ENCODE measurements at regions of chr3 and their contacts with region 1.

Region 1: GRCh38 chr3:133573054-133573628 is 345 bp upstream of the CDV3 start:
- DNase-seq: peak; percentile 100
- H3K4me3 ChIP-seq: peak overlapping the region; percentile 96
- H3K4me3 Mint-ChIP-seq: peak overlapping the region; percentile 81
- H3K27ac Mint-ChIP-seq: peak overlapping the region; percentile 96
- H3K4me1 ChIP-seq: peaks cover 58% of the 10 kb centered on the region
- H3K4me1 Mint-ChIP-seq: peaks cover 33% of the 10 kb centered on the region
- H3K27me3 ChIP-seq: no peaks in the 10 kb centered on the region
- H3K27me3 Mint-ChIP-seq: no peaks in the 10 kb centered on the region
- CTCF ChIP-seq: peak in 1 of 2 experiments; percentile 27

Region 2: GRCh38 chr3:132236701-132237651 is 1336.2 kb before region 1 on chr3:
- CTCF ChIA-PET with region 1: no interaction called
- POLR2A ChIA-PET with region 1: no interaction called
- intact Hi-C with region 1: no loop called
- DNase-seq: no peak
- H3K4me3 ChIP-seq: no peak overlapping the region
- H3K4me3 Mint-ChIP-seq: no peak overlapping the region
- H3K27ac Mint-ChIP-seq: no peak overlapping the region
- H3K4me1 ChIP-seq: no peaks in the 10 kb centered on the region
- H3K4me1 Mint-ChIP-seq: no peaks in the 10 kb centered on the region
- H3K27me3 ChIP-seq: no peaks in the 10 kb centered on the region
- H3K27me3 Mint-ChIP-seq: peaks cover 1% of the 10 kb centered on the region
- CTCF ChIP-seq: no peak

Region 3: GRCh38 chr3:133040696-133041523 is 532.2 kb before region 1 on chr3:
- CTCF ChIA-PET with region 1: interaction called, 4 read pairs
- POLR2A ChIA-PET with region 1: interaction called, 10 read pairs
- intact Hi-C with region 1: no loop called
- DNase-seq: peak; percentile 61 to 82
- H3K4me3 ChIP-seq: no peak overlapping the region
- H3K4me3 Mint-ChIP-seq: no peak overlapping the region
- H3K27ac Mint-ChIP-seq: no peak overlapping the region
- H3K4me1 ChIP-seq: no peaks in the 10 kb centered on the region
- H3K4me1 Mint-ChIP-seq: no peaks in the 10 kb centered on the region
- H3K27me3 ChIP-seq: no peaks in the 10 kb centered on the region
- H3K27me3 Mint-ChIP-seq: peaks cover 10% of the 10 kb centered on the region
- CTCF ChIP-seq: peak; percentile 80 to 83

Region 4: GRCh38 chr3:133475245-133476010 is 97.7 kb before region 1 on chr3:
- CTCF ChIA-PET with region 1: interaction called, 9 read pairs
- POLR2A ChIA-PET with region 1: interaction called, 16 read pairs
- intact Hi-C with region 1: loop called (anchors 1 kb)
- DNase-seq: peak in 1 of 2 experiments; percentile 29
- H3K4me3 ChIP-seq: no peak overlapping the region
- H3K4me3 Mint-ChIP-seq: no peak overlapping the region
- H3K27ac Mint-ChIP-seq: peak overlapping the region; percentile 34
- H3K4me1 ChIP-seq: peaks cover 74% of the 10 kb centered on the region
- H3K4me1 Mint-ChIP-seq: peaks cover 70% of the 10 kb centered on the region
- H3K27me3 ChIP-seq: no peaks in the 10 kb centered on the region
- H3K27me3 Mint-ChIP-seq: no peaks in the 10 kb centered on the region
- CTCF ChIP-seq: no peak

Region 5: DNA sequence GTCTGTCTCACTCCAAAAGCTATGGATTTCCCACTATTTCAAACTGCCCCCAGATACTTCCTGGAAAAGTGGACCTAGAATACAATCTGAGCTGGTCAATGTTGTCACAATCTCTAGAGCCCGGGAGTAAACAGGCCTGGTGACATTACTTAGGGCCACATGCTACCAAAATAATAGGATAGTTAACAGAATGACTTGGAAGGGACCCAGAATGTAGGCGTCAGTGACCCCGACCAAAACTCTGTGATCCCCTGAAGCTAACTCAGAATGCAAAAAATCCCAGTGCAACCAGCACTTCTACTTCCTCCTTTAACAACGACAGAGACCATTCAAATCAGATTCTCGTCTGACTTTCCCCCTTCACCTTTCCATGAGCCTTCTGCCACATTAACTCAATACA is 51.2 kb before region 1 on chr3:
- CTCF ChIA-PET with region 1: no interaction called
- POLR2A ChIA-PET with region 1: no interaction called
- intact Hi-C with region 1: no loop called
- DNase-seq: no peak
- H3K4me3 ChIP-seq: no peak overlapping the region
- H3K4me3 Mint-ChIP-seq: no peak overlapping the region
- H3K27ac Mint-ChIP-seq: no peak overlapping the region
- H3K4me1 ChIP-seq: no peaks in the 10 kb centered on the region
- H3K4me1 Mint-ChIP-seq: peaks cover 7% of the 10 kb centered on the region
- H3K27me3 ChIP-seq: no peaks in the 10 kb centered on the region
- H3K27me3 Mint-ChIP-seq: no peaks in the 10 kb centered on the region
- CTCF ChIP-seq: no peak

Region 6: DNA sequence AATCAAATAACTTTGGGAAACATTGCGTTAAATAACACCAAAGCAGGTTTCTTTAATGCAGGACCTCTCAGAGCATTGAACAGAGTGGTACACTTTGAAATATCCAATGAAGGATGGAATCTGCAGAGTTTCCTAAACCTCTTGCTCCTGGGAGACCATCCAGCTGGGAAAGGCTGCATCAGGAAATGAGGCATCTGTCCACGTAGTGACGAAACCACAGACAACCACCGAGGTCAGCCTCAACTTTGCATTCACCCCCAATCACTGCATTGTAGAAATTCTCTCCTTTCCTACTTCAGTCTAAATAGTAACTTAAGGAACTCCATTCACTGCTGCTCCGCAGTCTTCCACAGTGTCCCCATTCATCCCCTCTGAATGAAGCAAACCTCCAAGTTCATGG is 41.2 kb before region 1 on chr3:
- CTCF ChIA-PET with region 1: interaction called, 3 read pairs
- POLR2A ChIA-PET with region 1: interaction called, 6 read pairs
- intact Hi-C with region 1: loop called (anchors 5 kb)
- DNase-seq: no peak
- H3K4me3 ChIP-seq: no peak overlapping the region
- H3K4me3 Mint-ChIP-seq: no peak overlapping the region
- H3K27ac Mint-ChIP-seq: peak overlapping the region; percentile 95
- H3K4me1 ChIP-seq: peaks cover 48% of the 10 kb centered on the region
- H3K4me1 Mint-ChIP-seq: peaks cover 52% of the 10 kb centered on the region
- H3K27me3 ChIP-seq: no peaks in the 10 kb centered on the region
- H3K27me3 Mint-ChIP-seq: no peaks in the 10 kb centered on the region
- CTCF ChIP-seq: no peak